Common myeloid progenitor, CD34-positive (primary cell): ENCODE measurements at regions of chr12 and their contacts with region 1.

Region 1: DNA sequence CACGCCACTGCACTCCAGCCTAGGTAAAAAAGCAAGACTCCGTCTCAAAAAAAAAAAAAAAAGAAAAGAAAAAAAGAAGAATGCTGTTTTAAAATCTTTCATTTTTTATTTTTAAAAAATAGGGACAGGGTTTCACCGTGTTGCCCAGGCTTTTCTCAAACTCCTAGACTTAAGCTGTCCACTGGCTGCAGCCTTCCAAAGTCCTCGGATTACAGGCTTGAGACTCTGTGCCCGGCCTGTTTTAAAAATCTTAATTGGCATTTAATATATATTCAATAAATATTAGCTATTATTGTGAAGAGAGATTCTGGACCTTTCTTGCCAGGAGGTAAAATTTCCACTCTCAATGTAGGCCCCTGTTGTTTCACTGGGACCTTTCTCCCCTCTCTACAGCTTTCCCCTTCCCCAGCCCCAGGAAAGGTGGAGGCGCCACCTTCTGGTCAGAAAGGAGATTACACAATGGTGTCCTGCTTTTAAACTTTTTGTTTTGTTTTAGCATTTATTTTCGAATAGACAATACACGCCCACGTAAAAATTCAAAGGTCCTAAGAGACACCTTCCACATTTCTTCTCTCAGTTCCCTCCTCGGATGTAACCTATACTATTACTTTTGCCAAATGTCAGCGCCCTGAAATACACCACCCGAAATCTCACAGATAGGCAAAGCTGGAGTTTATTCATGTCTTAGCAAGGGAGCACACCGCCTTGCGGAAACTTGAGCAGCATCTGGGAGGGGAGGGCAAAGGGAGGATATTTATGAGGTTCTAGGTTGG is 23.8 kb upstream of the PHC1 start:
- DNase-seq: peak; percentile 62 to 71 (median 66)
- H3K4me3 ChIP-seq: peak overlapping the region in 6 of 7 experiments; percentile 66 to 97 (median 90)
- H3K27ac ChIP-seq: peak overlapping the region in 1 of 2 experiments; percentile 49
- H3K4me1 ChIP-seq: peaks cover 0 to 2% (median 0%) of the 10 kb centered on the region in 4 experiments
- H3K27me3 ChIP-seq: no peaks in the 10 kb centered on the region

Region 2: DNA sequence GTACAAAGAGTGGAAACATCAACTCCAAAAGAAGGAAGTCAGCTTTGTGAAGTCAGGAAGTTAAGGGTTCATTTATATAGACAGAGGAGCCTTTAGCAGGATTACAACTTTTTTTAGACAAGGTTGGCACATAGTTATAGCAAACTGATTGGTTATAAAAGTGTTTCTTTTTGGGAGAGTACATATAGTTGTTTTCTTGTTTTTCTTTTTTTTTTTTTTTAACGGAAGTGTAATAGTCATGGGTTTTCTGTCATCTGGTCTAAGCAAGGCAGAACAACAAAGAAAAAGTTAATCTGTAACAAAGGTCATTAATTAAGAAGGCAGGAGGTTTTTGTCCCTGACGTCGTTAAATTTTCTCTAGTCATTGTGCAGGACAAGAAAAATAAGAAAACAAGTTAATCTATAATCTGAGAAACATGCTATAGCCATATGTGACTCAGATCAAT is 214.9 kb before region 1 on chr12:
- CTCF ChIA-PET with region 1: interaction called, 10 read pairs
- POLR2A ChIA-PET with region 1: no interaction called
- DNase-seq: no peak
- H3K4me3 ChIP-seq: no peak overlapping the region
- H3K27ac ChIP-seq: no peak overlapping the region
- H3K4me1 ChIP-seq: peaks cover 0 to 4% (median 2%) of the 10 kb centered on the region in 4 experiments
- H3K27me3 ChIP-seq: no peaks in the 10 kb centered on the region

Region 3: GRCh38 chr12:8681041-8681902 is 209.2 kb before region 1 on chr12:
- CTCF ChIA-PET with region 1: interaction called, 13 read pairs
- POLR2A ChIA-PET with region 1: no interaction called
- DNase-seq: no peak
- H3K4me3 ChIP-seq: no peak overlapping the region
- H3K27ac ChIP-seq: no peak overlapping the region
- H3K4me1 ChIP-seq: peaks cover 0 to 2% (median 0%) of the 10 kb centered on the region in 4 experiments
- H3K27me3 ChIP-seq: no peaks in the 10 kb centered on the region

Region 4: GRCh38 chr12:8905546-8905945 is 15.0 kb after region 1 on chr12:
- CTCF ChIA-PET with region 1: interaction called, 11 read pairs
- POLR2A ChIA-PET with region 1: no interaction called
- DNase-seq: no peak
- H3K4me3 ChIP-seq: no peak overlapping the region
- H3K27ac ChIP-seq: no peak overlapping the region
- H3K4me1 ChIP-seq: peaks cover 0 to 19% (median 6%) of the 10 kb centered on the region in 4 experiments
- H3K27me3 ChIP-seq: peaks cover 0 to 31% (median 11%) of the 10 kb centered on the region in 5 experiments